ENCODE measurements at regions of chr14 and their contacts with region 1.

Region 1: DNA sequence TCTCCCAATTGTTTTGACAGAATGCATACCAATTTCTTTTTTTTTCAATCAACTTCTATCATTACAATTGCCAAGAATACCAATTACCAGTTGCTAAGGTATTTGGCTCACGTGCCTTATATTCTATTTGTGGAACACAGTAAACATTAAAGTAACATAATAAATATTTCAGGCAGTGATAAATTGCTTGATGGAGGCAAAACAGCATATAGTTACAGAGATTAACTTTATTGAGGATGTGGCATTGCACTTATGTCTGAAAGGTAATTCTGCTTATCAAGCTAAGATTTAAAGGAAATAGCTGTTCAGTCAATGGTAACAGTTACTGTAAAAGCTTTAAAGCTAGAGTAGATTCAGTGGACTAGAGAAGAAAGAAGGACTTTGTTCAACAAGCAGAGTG is 1107.8 kb downstream of the FSCB start:
- DNase-seq: no peak
- H3K4me3 ChIP-seq: no peak overlapping the region
- H3K27ac ChIP-seq: no peak overlapping the region
- H3K4me1 ChIP-seq: no peaks in the 10 kb centered on the region
- H3K27me3 ChIP-seq: no peaks in the 10 kb centered on the region
- CTCF ChIP-seq: no peak

Region 2: GRCh38 chr14:43161477-43161876 is 237.8 kb before region 1 on chr14:
- CTCF ChIA-PET with region 1: interaction called, 13 read pairs
- POLR2A ChIA-PET with region 1: no interaction called
- intact Hi-C with region 1: no loop called
- DNase-seq: no peak
- H3K4me3 ChIP-seq: no peak overlapping the region
- H3K27ac ChIP-seq: no peak overlapping the region
- H3K4me1 ChIP-seq: no peaks in the 10 kb centered on the region
- H3K27me3 ChIP-seq: no peaks in the 10 kb centered on the region
- CTCF ChIP-seq: no peak